ENCODE measurements at regions of chr22 and their contacts with region 1.

Region 1: DNA sequence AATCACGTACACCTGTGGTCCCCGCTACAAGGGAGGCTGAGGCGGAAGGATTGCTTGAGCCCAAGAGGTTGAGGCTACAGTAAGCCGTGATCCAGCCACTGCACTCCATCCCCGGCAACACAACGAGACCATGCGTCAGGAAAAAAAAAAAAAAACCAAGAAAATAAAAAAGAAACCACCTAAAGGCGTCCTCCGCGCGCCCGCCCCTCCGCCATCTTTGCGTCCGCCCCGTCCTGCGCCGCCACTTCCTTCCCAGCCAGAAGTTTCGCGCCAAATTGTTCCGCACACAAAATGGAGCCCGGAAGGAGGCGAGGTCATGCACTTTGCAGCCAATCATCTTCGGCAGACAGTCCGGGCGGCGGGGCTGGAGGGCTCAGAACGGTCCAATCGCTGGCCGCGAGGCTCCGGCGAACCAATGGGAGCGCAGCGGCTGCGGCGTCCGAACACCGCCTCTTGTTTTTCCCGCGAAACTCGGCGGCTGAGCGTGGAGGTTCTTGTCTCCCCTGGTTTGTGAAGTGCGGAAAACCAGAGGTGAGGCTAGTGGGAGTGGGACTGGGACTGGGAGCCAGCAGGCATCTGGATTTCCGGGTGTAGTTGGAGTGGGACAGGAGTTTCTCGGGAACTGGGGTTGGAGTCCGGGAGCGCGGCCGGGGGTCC is at the start of gene MCM5:
- DNase-seq: peak; percentile 97
- H3K4me3 ChIP-seq: peak within 1 kb of the TSS; percentile 87 to 97 (median 89)
- H3K27ac ChIP-seq: peak within 1 kb of the TSS; percentile 78
- H3K4me1 ChIP-seq: peaks cover 10% of the 10 kb centered on the region
- H3K27me3 ChIP-seq: no peaks in the 10 kb centered on the region
- CTCF ChIP-seq: no peak
- total RNA-seq, gene MCM5: 12.0 to 72.5 TPM

Region 2: GRCh38 chr22:35299673-35300497 is 99.9 kb before region 1 on chr22 and contains the start of gene TOM1:
- CTCF ChIA-PET with region 1: no interaction called
- dilution Hi-C with region 1: loop called (anchors 10 kb)
- in situ Hi-C with region 1: no loop called
- intact Hi-C with region 1: no loop called
- DNase-seq: peak; percentile 98
- H3K4me3 ChIP-seq: peak within 1 kb of the TSS; percentile 76 to 95 (median 82)
- H3K27ac ChIP-seq: peak within 1 kb of the TSS; percentile 72
- H3K4me1 ChIP-seq: peaks cover 24% of the 10 kb centered on the region
- H3K27me3 ChIP-seq: no peaks in the 10 kb centered on the region
- CTCF ChIP-seq: no peak
- total RNA-seq, gene TOM1: 19.7 to 30.0 TPM

Region 3: DNA sequence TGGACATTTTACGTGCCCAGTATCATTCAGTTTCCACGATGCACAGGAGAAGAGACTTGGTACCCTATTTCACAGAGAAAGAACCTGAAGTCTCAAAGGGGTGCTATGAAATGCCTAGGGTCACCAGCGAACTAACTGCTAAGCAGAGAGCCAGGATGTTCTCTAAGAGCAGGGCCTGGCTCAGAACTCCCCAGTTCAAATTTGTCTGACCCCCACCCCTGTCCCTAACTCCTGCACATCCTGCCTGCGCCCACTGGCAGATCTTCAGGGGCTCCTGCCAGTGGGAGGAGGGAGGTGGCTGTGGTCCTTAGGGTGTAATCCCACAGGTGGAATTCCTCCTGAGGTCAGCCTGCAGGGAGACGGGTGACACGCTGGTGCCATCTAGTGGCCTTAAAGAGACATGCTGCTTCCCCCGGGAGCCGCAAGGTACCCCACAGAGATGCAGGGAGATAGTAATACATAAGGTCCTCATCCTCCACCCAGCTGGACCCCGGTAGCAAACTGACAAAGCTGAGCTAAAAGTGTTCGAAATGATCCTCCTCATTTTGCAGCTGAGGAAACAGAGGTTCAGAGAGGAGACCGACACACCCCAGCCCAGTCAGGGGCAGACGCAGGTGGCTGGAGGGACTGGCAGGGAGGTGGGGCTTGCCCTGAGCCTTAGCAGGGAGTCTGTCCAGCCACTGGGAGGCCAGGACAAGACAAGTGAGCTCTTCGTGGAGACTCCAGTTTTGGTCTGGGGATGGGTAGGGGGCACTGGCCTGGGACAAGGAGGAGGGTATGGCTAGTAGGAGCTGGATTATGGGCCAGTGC is 183.3 kb after region 1 on chr22:
- CTCF ChIA-PET with region 1: no interaction called
- dilution Hi-C with region 1: loop called (anchors 10 kb)
- in situ Hi-C with region 1: no loop called
- intact Hi-C with region 1: no loop called
- DNase-seq: no peak
- H3K4me3 ChIP-seq: no peak overlapping the region
- H3K27ac ChIP-seq: no peak overlapping the region
- H3K4me1 ChIP-seq: peaks cover under 1% of the 10 kb centered on the region
- H3K27me3 ChIP-seq: no peaks in the 10 kb centered on the region
- CTCF ChIP-seq: peak; percentile 85 to 93